CD4-positive, alpha-beta memory T cell (primary cell): ENCODE measurements at regions of chr12 and their contacts with region 1.

Region 1: DNA sequence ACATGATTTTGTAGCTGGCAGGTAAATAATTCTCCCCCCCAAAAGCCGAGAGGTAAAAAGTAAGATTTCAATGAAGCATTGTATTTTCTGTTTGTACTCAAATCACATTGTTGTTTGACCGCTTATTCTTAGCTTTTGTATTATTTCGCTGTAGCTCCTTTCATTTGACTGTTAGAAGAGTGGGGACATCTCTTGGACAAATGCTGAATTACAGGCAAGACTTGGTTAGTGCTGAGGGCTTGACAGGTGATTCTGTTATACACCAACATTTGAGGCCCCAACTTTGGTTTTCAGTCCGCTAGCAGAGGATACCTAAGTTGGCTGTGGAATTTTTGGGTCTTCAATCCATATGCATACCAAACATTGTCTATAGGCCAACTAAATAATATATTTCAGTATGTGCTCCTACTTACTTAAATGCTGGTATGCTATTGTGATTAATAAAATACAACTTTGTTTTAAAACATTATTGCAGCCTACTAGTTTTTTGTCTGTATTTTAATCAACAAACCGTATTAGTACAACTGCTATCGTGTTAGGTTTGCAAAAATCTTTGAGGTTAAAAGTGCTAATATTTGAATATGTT is 102.2 kb downstream of the ERC1 start:
- DNase-seq: peak; percentile 38 to 52 (median 44)
- H3K4me3 ChIP-seq: no peak overlapping the region
- H3K4me3 Mint-ChIP-seq: no peak overlapping the region
- H3K27ac ChIP-seq: no peak overlapping the region
- H3K27ac Mint-ChIP-seq: no peak overlapping the region
- H3K4me1 ChIP-seq: no peaks in the 10 kb centered on the region
- H3K4me1 Mint-ChIP-seq: peaks cover 1 to 15% (median 8%) of the 10 kb centered on the region in 4 donors
- H3K27me3 ChIP-seq: no peaks in the 10 kb centered on the region
- H3K27me3 Mint-ChIP-seq: no peaks in the 10 kb centered on the region

Region 2: DNA sequence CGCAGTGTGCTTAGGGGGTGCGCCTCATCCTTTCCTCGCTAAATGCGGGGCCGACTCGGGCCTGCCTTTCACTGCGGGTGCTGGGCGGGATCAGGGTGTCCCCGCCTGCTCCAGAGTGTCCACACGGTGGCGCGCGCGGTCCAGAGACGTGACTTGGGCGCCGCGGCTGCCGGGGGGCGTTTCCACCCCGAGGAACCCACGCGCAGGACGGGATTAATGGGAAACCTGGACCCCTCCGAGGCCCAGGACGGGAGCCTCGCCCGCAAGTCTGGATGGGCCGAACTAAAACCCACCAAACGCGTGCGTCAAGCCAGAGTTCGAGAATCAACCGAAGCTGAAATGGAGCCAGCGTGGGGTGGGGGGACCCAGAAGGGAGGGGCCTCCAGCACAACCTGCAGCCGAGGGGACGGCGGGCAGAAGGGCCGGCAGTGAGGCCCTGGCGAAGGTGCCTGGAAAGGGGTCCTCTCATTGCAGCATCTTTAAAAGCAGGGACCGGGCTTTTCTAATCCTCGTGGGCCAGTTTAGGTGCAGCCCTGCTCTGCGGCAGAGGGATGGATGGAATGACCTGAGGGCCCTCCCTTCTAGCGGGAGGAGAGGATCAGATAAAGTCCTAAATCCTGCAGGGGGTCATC is 523.3 kb before region 1 on chr12:
- CTCF ChIA-PET with region 1: interaction called, 13 read pairs
- POLR2A ChIA-PET with region 1: no interaction called
- intact Hi-C with region 1: loop called (anchors 10 kb)
- DNase-seq: peak; percentile 79 to 84 (median 82)
- H3K4me3 ChIP-seq: peak overlapping the region; percentile 52 to 65
- H3K4me3 Mint-ChIP-seq: peak overlapping the region; percentile 78 to 90 (median 86)
- H3K27ac ChIP-seq: peak overlapping the region; percentile 47
- H3K27ac Mint-ChIP-seq: peak overlapping the region in 6 of 7 donors; percentile 64 to 88 (median 80)
- H3K4me1 ChIP-seq: peaks cover 43% of the 10 kb centered on the region
- H3K4me1 Mint-ChIP-seq: peaks cover 35 to 54% (median 42%) of the 10 kb centered on the region in 4 donors
- H3K27me3 ChIP-seq: no peaks in the 10 kb centered on the region
- H3K27me3 Mint-ChIP-seq: no peaks in the 10 kb centered on the region

Region 3: GRCh38 chr12:823028-823698 is 270.1 kb before region 1 on chr12:
- CTCF ChIA-PET with region 1: interaction called, 27 read pairs
- POLR2A ChIA-PET with region 1: no interaction called
- intact Hi-C with region 1: loop called (anchors 5 kb)
- DNase-seq: no peak
- H3K4me3 ChIP-seq: no peak overlapping the region
- H3K4me3 Mint-ChIP-seq: peak overlapping the region in 3 of 8 donors; percentile 6 to 65 (median 64)
- H3K27ac ChIP-seq: no peak overlapping the region
- H3K27ac Mint-ChIP-seq: peak overlapping the region in 4 of 7 donors; percentile 8 to 62 (median 44)
- H3K4me1 ChIP-seq: peaks cover 64% of the 10 kb centered on the region
- H3K4me1 Mint-ChIP-seq: peaks cover 31 to 65% (median 48%) of the 10 kb centered on the region in 4 donors
- H3K27me3 ChIP-seq: no peaks in the 10 kb centered on the region
- H3K27me3 Mint-ChIP-seq: no peaks in the 10 kb centered on the region

Region 4: GRCh38 chr12:990661-991349 is 102.5 kb before region 1 on chr12 and contains the start of gene ERC1:
- CTCF ChIA-PET with region 1: interaction called, 11 read pairs
- POLR2A ChIA-PET with region 1: no interaction called
- intact Hi-C with region 1: no loop called
- DNase-seq: peak; percentile 78 to 90 (median 85)
- H3K4me3 ChIP-seq: peak within 1 kb of the TSS; percentile 69 to 78
- H3K4me3 Mint-ChIP-seq: peak within 1 kb of the TSS; percentile 92 to 100 (median 98)
- H3K27ac ChIP-seq: peak within 1 kb of the TSS; percentile 69
- H3K27ac Mint-ChIP-seq: peak within 1 kb of the TSS; percentile 89 to 99 (median 98)
- H3K4me1 ChIP-seq: peaks cover 31% of the 10 kb centered on the region
- H3K4me1 Mint-ChIP-seq: peaks cover 27 to 45% (median 39%) of the 10 kb centered on the region in 4 donors
- H3K27me3 ChIP-seq: no peaks in the 10 kb centered on the region
- H3K27me3 Mint-ChIP-seq: no peaks in the 10 kb centered on the region
- total RNA-seq, gene ERC1: 34.3 to 41.7 TPM

Region 5: GRCh38 chr12:1108276-1108675 is 15.0 kb after region 1 on chr12:
- CTCF ChIA-PET with region 1: interaction called, 11 read pairs
- POLR2A ChIA-PET with region 1: no interaction called
- intact Hi-C with region 1: no loop called
- DNase-seq: no peak
- H3K4me3 ChIP-seq: no peak overlapping the region
- H3K4me3 Mint-ChIP-seq: no peak overlapping the region
- H3K27ac ChIP-seq: no peak overlapping the region
- H3K27ac Mint-ChIP-seq: peak overlapping the region in 1 of 7 donors; percentile 7
- H3K4me1 ChIP-seq: no peaks in the 10 kb centered on the region
- H3K4me1 Mint-ChIP-seq: peaks cover 4 to 12% (median 8%) of the 10 kb centered on the region in 4 donors
- H3K27me3 ChIP-seq: no peaks in the 10 kb centered on the region
- H3K27me3 Mint-ChIP-seq: no peaks in the 10 kb centered on the region